ENCODE measurements at regions of chr5 and their contacts with region 1.

Region 1: GRCh38 chr5:95835682-95836385 is 13.3 kb upstream of the GLRX start:
- DNase-seq: peak in 1 of 2 donors; percentile 55
- ATAC-seq: no peak
- H3K4me3 ChIP-seq: peak overlapping the region; percentile 59 to 78 (median 66)
- H3K27ac ChIP-seq: peak overlapping the region; percentile 90 to 95 (median 92)
- H3K4me1 ChIP-seq: peaks cover 21 to 56% of the 10 kb centered on the region in 2 donors
- H3K27me3 ChIP-seq: no peaks in the 10 kb centered on the region
- CTCF ChIP-seq: no peak
- POLR2A ChIP-seq: no peak

Region 2: GRCh38 chr5:95915999-95916686 is 80.3 kb after region 1 on chr5:
- in situ Hi-C with region 1: no loop called
- intact Hi-C with region 1: no loop called
- DNase-seq: no peak
- ATAC-seq: no peak
- H3K4me3 ChIP-seq: no peak overlapping the region
- H3K27ac ChIP-seq: no peak overlapping the region
- H3K4me1 ChIP-seq: peaks cover 22 to 33% of the 10 kb centered on the region in 2 donors
- H3K27me3 ChIP-seq: no peaks in the 10 kb centered on the region
- CTCF ChIP-seq: no peak
- POLR2A ChIP-seq: no peak

Region 3: GRCh38 chr5:96702503-96703383 is 866.9 kb after region 1 on chr5:
- in situ Hi-C with region 1: loop called in 2 of 4 experiments (anchors 10 to 25 kb)
- intact Hi-C with region 1: loop called (anchors 5 kb)
- DNase-seq: peak; percentile 97 to 98
- ATAC-seq: peak; percentile 49 to 68
- H3K4me3 ChIP-seq: peak overlapping the region; percentile 63 to 87 (median 79)
- H3K27ac ChIP-seq: peak overlapping the region; percentile 94 to 99 (median 98)
- H3K4me1 ChIP-seq: peaks cover 38 to 75% of the 10 kb centered on the region in 2 donors
- H3K27me3 ChIP-seq: no peaks in the 10 kb centered on the region
- CTCF ChIP-seq: no peak
- POLR2A ChIP-seq: peak; percentile 90 to 93